Posterior vena cava (tissue), 2 donors: ENCODE measurements at regions of chr13 and their contacts with region 1.

Region 1: GRCh38 chr13:79034341-79034740 is 371.7 kb downstream of the RBM26 start:
- DNase-seq: no peak

Region 2: GRCh38 chr13:78625384-78625783 is 409.0 kb before region 1 on chr13:
- intact Hi-C with region 1: loop called in 1 of 2 experiments (anchors 5 kb)
- DNase-seq: no peak

Region 3: GRCh38 chr13:78971355-78972025 is 62.9 kb before region 1 on chr13:
- intact Hi-C with region 1: no loop called
- DNase-seq: no peak

Region 4: GRCh38 chr13:79056706-79057105 is 22.4 kb after region 1 on chr13:
- intact Hi-C with region 1: no loop called
- DNase-seq: no peak